Left cardiac atrium (tissue), 4 donors: ENCODE measurements at regions of chr3 and their contacts with region 1.

Region 1: DNA sequence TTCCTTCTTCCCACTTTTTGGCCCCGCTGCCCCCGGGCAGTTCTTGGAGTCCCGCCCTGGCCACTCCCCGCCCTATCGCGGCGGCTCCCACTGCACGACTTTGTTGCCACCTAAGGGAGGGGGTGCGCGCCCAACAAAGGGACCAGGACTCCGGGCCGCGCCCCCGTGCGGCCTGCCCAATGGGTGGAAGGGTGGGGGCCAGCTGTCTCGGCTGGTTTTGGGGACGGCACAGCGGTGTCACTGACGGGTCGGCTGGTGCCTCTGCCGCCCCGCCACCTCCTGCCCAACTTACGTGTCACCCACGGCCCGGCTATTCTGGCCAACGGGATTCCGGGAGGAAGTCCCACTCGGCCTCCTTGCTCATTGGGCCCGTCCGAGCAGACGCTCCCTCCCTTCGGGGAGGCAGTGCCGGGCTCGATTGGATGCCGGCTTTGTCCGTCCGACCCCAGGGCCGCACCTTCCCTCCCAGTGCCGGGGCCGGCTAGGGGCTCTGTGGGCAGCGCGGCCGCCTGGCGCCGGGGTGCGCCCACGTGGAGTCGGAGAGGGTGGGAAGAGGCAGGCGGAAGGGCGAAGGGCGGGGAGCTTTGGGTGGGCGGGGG is at the start of gene GOLIM4:
- DNase-seq: peak; percentile 97
- ATAC-seq: peak; percentile 94 to 97
- total RNA-seq, gene GOLIM4: 52.3 to 52.4 TPM

Region 2: DNA sequence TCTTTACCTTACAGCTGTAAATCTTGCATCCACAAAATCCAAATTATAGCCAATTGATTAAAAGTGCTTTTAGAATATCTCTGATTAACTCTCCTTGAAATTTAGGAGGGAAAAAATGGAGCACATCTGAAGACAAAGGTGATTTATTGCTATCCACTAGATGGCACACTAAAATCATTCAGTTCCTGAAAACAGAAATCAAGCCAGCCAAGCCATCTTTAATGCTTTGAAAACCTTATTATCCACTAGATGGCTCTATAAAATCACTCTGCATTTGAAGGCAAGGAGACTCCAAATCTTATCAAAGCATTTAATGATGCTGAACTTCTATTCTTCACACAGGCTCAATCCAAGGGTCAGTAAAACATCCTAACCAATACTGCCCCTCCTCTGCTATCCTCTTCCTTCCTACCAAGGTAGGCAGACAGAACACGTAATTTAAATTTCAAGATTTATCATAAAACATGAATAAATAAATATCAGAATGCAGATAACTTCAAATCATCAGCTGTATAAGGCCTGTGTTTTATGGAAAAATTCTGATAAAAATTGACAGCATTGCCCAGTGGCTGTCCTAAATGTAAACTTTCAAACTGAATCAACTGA is 48.4 kb before region 1 on chr3:
- intact Hi-C with region 1: loop called (anchors 2 to 5 kb)
- DNase-seq: no peak
- ATAC-seq: peak; percentile 63 to 76

Region 3: DNA sequence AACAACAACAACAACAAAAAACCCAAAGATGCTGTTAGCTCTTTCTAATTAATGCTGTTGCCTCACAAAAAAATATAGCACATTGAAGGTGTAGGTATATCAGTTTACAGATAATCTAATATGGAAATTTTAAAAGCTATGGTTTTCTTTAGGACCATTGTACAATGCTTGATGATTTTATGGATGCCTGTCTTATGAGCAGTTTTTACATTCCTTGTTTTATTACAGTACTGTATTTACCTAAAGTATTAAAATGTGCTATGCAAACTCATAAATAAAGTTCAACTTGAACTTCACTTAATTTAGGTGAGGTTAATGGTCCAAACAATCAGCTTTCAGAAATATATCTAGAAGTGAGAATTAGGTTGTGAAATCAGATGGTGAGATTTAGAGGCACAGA is 212.2 kb after region 1 on chr3:
- intact Hi-C with region 1: no loop called
- DNase-seq: no peak
- ATAC-seq: no peak